PC-9 (cell line): ENCODE measurements at regions of chr5 and their contacts with region 1.

Region 1: DNA sequence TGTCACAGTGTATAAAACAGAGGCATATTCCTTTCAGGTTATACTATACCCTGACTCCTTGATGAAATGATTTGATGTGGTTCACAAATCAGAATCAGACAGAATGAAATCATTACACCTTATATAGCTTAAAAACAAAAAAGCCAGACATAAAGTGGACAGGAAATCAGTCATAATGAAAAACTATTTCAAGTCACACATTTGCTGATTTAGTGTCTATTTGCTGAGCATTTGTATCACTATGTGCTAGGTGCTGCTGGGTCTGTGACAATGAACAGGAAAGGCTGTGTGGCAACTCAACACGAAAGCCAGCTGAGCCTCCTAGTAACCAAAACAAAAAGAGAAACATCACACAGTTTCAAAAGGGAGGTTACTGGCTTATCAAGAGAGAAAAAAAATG is 194.0 kb downstream of the EFNA5 start:
- DNase-seq: peak; percentile 33 to 85
- H3K4me3 ChIP-seq: no peak overlapping the region
- H3K27ac ChIP-seq: peak overlapping the region; percentile 90
- H3K4me1 ChIP-seq: peaks cover 77% of the 10 kb centered on the region
- H3K27me3 ChIP-seq: no peaks in the 10 kb centered on the region
- CTCF ChIP-seq: no peak

Region 2: GRCh38 chr5:107203243-107203642 is 273.5 kb before region 1 on chr5:
- CTCF ChIA-PET with region 1: no interaction called
- POLR2A ChIA-PET with region 1: interaction called, 10 read pairs
- intact Hi-C with region 1: no loop called
- DNase-seq: no peak
- H3K4me3 ChIP-seq: no peak overlapping the region
- H3K27ac ChIP-seq: no peak overlapping the region
- H3K4me1 ChIP-seq: no peaks in the 10 kb centered on the region
- H3K27me3 ChIP-seq: no peaks in the 10 kb centered on the region
- CTCF ChIP-seq: no peak

Region 3: DNA sequence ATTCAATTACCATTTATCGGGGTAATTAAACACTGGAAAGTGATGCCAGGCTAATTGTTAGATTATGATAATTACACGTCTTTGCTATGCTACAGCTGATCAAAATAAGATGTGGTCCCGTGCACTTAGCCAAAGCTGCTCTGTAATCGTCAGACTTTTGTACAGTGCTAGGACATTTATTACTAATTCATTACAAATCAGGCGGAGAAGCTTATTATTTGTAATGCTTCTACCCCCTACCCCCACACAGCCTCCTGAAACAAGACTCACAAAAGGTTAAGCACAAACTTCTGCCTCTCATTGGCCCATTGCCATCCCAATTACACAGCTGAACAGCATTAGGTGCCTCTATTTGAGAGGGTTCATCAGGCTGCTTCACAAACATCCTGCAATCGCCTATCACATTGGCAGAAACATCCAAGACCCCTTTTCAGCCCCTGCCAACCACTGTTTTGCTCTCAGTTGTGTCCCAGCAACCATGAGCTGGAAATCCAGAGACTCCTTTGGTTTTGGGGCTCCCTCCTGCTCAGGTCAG is 38.7 kb before region 1 on chr5:
- CTCF ChIA-PET with region 1: no interaction called
- POLR2A ChIA-PET with region 1: no interaction called
- intact Hi-C with region 1: no loop called
- DNase-seq: no peak
- H3K4me3 ChIP-seq: no peak overlapping the region
- H3K27ac ChIP-seq: no peak overlapping the region
- H3K4me1 ChIP-seq: peaks cover 4% of the 10 kb centered on the region; the same call in 1 of the 2 replicates
- H3K27me3 ChIP-seq: no peaks in the 10 kb centered on the region
- CTCF ChIP-seq: no peak

Region 4: DNA sequence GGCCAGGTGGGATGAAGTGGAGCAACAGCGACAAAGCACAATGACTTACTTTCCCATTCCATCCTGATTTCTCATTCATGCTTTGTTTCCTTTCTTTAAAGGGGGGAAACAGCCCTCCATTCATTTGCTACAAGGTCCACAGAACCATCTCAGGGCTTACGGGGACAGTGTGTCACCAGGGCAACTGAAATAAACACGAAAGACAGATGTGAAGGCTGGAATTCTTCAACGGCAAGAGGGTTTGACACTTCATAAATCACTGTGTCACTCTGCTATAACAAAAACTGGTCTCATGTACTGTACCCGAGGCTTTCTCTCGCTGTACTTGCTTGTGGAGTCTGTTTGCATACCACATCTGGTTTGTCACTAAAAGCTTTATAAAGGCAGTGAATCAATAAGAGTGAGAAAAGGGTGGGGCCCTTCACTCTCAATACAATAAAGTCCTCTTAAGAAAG is 43.1 kb after region 1 on chr5:
- CTCF ChIA-PET with region 1: no interaction called
- POLR2A ChIA-PET with region 1: no interaction called
- intact Hi-C with region 1: loop called (anchors 2 kb)
- DNase-seq: peak; percentile 36 to 38
- H3K4me3 ChIP-seq: no peak overlapping the region
- H3K27ac ChIP-seq: no peak overlapping the region; the same call in 1 of the 2 replicates
- H3K4me1 ChIP-seq: peaks cover 3% of the 10 kb centered on the region; the same call in 1 of the 2 replicates
- H3K27me3 ChIP-seq: no peaks in the 10 kb centered on the region
- CTCF ChIP-seq: no peak